WTC11 (cell line): ENCODE measurements at regions of chr12 and their contacts with region 1.

Region 1: GRCh38 chr12:25236190-25236589 is 14.5 kb downstream of the KRAS start:
- DNase-seq: no peak
- ATAC-seq: no peak
- H3K4me3 Mint-ChIP-seq: no peak overlapping the region
- H3K27ac Mint-ChIP-seq: peak overlapping the region; percentile 26; the same call in 1 of the 2 replicates
- H3K4me1 Mint-ChIP-seq: no peaks in the 10 kb centered on the region; the same call in 1 of the 2 replicates
- H3K27me3 Mint-ChIP-seq: no peaks in the 10 kb centered on the region
- CTCF ChIP-seq: no peak

Region 2: GRCh38 chr12:25156061-25156460 is 80.1 kb before region 1 on chr12:
- CTCF ChIA-PET with region 1: no interaction called
- POLR2A ChIA-PET with region 1: no interaction called
- DNase-seq: no peak
- ATAC-seq: no peak
- H3K4me3 Mint-ChIP-seq: no peak overlapping the region
- H3K27ac Mint-ChIP-seq: no peak overlapping the region
- H3K4me1 Mint-ChIP-seq: peaks cover 26% of the 10 kb centered on the region
- H3K27me3 Mint-ChIP-seq: no peaks in the 10 kb centered on the region
- CTCF ChIP-seq: no peak

Region 3: DNA sequence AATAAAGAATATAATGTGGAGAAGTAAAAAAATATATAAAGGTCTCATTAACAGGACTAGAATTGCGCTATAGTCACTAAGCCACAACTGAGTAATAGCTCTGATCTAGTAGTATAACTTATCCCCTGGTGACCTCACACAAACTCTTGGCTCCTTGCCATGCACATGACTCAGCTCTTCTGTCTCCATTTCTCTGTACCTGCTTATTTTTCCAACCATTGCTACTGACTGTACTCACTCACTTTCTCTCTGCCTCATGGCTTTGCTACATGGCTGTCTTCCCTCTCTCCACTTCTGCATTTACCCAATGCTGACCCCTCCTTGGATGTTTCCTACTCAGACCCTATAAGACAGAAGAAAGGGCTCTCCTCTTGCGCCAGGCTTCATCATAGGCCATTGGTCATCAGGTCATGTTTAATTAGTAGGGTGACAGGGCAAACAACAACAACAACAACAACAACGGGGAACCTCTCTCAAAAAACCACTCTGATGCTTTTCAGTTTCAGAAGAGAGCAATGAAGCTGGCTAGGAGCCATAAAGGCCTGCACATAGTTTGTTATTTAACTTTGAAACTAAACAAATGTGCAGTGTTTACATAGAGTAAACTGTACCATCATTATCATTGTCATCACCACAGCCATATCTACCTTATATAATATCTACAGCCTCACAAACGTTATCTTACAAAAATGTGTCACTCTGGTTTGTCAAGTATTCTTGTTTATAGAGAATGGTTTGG is 40.2 kb after region 1 on chr12:
- CTCF ChIA-PET with region 1: no interaction called
- POLR2A ChIA-PET with region 1: no interaction called
- DNase-seq: no peak
- ATAC-seq: no peak
- H3K4me3 Mint-ChIP-seq: no peak overlapping the region
- H3K27ac Mint-ChIP-seq: peak overlapping the region; percentile 16; the same call in 1 of the 2 replicates
- H3K4me1 Mint-ChIP-seq: peaks cover 2% of the 10 kb centered on the region; the same call in 1 of the 2 replicates
- H3K27me3 Mint-ChIP-seq: no peaks in the 10 kb centered on the region
- CTCF ChIP-seq: no peak

Region 4: GRCh38 chr12:25985296-25986175 is 749.3 kb after region 1 on chr12:
- CTCF ChIA-PET with region 1: no interaction called
- POLR2A ChIA-PET with region 1: interaction called, 11 read pairs
- DNase-seq: no peak
- ATAC-seq: peak; percentile 72
- H3K4me3 Mint-ChIP-seq: no peak overlapping the region
- H3K27ac Mint-ChIP-seq: peak overlapping the region; percentile 26; the same call in 1 of the 2 replicates
- H3K4me1 Mint-ChIP-seq: peaks cover 50% of the 10 kb centered on the region
- H3K27me3 Mint-ChIP-seq: no peaks in the 10 kb centered on the region
- CTCF ChIP-seq: no peak